Activated CD4-positive, alpha-beta memory T cell treated with anti-CD3 and anti-CD28 coated beads for 36 hours (primary cell): ENCODE measurements at regions of chr6 and their contacts with region 1.

Region 1: DNA sequence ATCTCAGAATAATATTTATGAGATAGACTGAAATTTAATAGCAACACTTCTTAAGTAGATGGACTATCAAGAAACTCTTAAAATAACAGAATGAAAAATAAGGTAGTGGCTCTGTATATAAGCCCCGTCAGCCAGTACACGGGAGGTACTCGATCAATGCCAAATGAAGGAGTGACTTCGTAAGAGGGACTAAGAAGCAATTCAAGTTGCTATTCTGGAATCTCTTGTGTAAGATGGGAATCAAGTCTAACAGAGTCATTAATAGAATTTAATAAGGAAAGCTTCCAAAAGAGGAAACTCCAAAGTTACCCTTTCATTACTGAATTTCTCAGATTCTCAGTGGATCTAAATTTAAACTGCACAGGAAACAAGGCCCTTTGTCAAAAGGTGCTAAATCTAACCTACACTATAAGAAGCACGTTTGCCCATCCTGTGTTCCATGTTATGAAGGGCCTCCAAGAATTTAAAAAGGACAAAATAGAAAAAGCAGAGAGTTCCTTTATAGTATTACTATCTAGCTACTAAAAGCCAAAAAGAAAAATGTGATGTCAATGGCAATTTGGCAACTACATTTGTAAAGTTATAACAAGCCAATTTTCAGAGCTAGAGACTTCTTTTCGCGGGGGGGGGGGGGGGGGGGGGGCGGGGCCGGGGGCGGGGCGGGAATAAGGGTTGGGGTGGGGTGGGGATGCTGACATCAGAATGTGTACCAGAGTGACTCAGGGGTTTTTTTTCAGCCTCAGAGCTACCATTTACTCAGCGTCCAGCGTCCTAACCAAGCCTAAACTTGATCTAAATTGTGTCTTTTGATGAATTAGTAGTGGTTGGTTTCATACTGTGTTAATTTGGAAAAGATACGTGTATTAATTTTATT is 200.6 kb downstream of the GMPR start:
- DNase-seq: peak; percentile 62
- H3K4me3 Mint-ChIP-seq: peak overlapping the region; percentile 98
- H3K27ac Mint-ChIP-seq: peak overlapping the region; percentile 100
- H3K4me1 Mint-ChIP-seq: peaks cover 69% of the 10 kb centered on the region
- H3K27me3 Mint-ChIP-seq: no peaks in the 10 kb centered on the region

Region 2: DNA sequence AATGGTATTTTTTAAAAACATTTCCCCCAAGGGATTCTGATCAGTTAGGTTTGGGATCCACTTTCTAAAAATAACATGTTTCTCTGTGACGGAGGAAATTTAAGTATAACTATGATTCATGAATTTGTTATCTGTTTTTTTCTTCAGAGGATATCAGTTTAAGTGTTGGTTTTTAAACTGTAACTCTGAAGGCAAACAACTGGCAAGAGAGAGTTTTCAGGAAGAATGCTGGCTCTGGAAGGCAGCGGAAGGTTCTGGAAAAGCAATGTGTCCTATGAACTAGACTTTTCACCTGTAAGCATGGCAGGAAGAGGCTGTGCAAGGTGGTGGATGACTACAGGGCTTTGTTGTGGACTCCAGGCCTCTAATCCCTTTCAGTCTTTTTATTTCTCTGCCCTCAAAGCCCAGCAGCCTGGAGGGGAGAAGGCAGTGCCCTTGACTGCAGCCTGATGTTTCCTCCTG is 47.5 kb before region 1 on chr6:
- CTCF ChIA-PET with region 1: no interaction called
- POLR2A ChIA-PET with region 1: no interaction called
- intact Hi-C with region 1: no loop called
- DNase-seq: no peak
- H3K4me3 Mint-ChIP-seq: no peak overlapping the region
- H3K27ac Mint-ChIP-seq: no peak overlapping the region
- H3K4me1 Mint-ChIP-seq: peaks cover 7% of the 10 kb centered on the region
- H3K27me3 Mint-ChIP-seq: no peaks in the 10 kb centered on the region

Region 3: DNA sequence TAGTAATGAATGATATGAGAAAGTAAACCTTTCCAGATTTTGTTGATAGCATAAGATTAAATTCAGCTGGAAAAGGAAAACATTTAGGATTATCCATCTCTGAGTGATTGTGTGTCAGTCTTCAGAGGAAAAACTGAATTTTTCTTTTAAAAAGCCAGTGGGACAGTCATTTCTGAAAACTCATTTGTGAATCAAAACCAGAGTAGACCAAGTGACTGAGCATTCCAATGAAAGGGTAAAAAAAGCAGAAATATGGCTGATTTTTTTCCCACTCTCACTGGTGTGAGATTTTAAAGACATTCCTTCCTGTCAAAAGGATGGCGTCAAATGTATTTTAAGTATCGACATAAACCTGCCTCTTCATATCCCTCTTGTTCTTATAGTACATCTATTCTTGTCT is 13.4 kb after region 1 on chr6:
- CTCF ChIA-PET with region 1: no interaction called
- POLR2A ChIA-PET with region 1: interaction called, 3 read pairs
- intact Hi-C with region 1: loop called (anchors 1 kb)
- DNase-seq: no peak
- H3K4me3 Mint-ChIP-seq: no peak overlapping the region
- H3K27ac Mint-ChIP-seq: no peak overlapping the region
- H3K4me1 Mint-ChIP-seq: peaks cover 30% of the 10 kb centered on the region
- H3K27me3 Mint-ChIP-seq: no peaks in the 10 kb centered on the region

Region 4: GRCh38 chr6:16471222-16471909 is 32.4 kb after region 1 on chr6:
- CTCF ChIA-PET with region 1: interaction called, 6 read pairs
- POLR2A ChIA-PET with region 1: interaction called, 48 read pairs
- intact Hi-C with region 1: loop called (anchors 1 kb)
- DNase-seq: no peak
- H3K4me3 Mint-ChIP-seq: no peak overlapping the region
- H3K27ac Mint-ChIP-seq: peak overlapping the region; percentile 69
- H3K4me1 Mint-ChIP-seq: peaks cover 88% of the 10 kb centered on the region
- H3K27me3 Mint-ChIP-seq: no peaks in the 10 kb centered on the region

Region 5: DNA sequence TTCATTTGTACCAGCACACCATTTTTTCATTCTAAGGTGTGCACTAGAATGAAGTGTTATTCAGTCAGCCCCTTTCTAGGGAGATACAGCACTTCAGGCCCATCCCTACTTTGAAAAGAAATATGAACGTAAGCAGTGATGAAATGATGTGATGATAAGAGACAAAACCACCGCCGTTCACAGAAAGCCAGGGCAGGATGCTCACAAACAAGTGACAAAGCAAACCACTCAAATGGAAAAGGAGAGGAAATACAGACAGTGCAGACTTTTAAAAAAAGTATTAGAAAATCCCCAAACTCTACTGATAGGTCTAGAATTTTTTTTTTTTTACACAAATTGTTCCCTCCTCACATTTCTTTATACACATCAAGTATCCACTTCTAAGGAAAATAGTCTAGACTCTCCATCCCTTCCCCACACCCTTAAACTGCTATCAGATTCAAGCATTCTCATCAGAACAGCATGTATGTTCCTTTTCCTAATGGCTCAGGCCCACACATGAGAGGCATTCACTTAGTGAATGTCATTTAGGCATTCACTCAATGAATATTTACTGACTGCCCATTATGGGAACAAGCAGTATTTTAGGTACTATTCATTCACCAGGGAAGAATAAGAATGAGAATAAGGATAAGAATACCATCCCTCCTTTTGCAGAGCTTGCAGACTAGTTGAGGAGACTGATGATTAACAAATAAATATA is 42.9 kb after region 1 on chr6:
- CTCF ChIA-PET with region 1: interaction called, 3 read pairs
- POLR2A ChIA-PET with region 1: interaction called, 16 read pairs
- intact Hi-C with region 1: loop called (anchors 1 kb)
- DNase-seq: peak; percentile 76
- H3K4me3 Mint-ChIP-seq: peak overlapping the region; percentile 47
- H3K27ac Mint-ChIP-seq: peak overlapping the region; percentile 87
- H3K4me1 Mint-ChIP-seq: peaks cover 93% of the 10 kb centered on the region
- H3K27me3 Mint-ChIP-seq: no peaks in the 10 kb centered on the region

Region 6: DNA sequence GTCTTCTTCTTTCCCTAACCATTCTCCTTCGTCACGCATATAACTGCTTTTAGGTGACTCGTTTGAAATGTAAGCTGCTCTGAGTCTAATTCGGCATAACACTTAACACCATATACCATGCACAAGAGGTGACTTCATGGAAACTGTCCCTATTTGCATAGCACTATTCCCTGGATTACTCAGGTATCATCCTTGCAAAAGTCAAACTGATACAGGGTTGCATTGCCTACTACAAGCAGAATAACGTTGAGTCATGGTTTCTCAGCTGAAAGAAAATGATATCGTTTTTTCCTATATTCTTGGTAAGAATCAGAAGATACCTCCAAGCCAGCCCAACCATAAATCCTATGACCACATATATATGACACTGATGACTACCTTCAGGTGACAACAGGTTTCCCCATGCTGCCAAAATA is 94.8 kb after region 1 on chr6:
- CTCF ChIA-PET with region 1: no interaction called
- POLR2A ChIA-PET with region 1: interaction called, 3 read pairs
- intact Hi-C with region 1: loop called (anchors 2 kb)
- DNase-seq: no peak
- H3K4me3 Mint-ChIP-seq: no peak overlapping the region
- H3K27ac Mint-ChIP-seq: peak overlapping the region; percentile 77
- H3K4me1 Mint-ChIP-seq: peaks cover 43% of the 10 kb centered on the region
- H3K27me3 Mint-ChIP-seq: no peaks in the 10 kb centered on the region